CD4-positive, alpha-beta T cell (primary cell): ENCODE measurements at regions of chr5 and their contacts with region 1.

Region 1: DNA sequence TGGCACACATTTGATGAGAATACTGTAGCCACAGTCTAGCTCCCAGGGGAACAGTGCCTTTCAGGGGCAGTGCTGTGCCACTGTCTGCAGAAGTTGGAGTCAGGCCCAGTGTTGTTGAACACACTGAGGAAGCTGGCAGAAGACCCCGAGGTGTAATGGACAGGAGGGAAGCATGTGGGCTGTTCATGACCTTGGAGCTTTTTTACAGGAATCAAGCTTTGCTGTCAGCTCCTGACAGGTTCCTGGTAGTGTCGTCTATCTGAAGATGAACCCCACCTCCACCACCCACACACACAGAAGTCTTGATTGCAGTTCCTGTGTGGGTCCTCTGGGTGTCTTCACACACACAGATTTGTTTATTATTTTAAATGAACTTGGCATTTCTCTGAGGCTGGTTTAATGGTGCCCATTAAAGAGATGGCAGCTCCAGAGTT is 40.3 kb upstream of the TNFAIP8 start:
- DNase-seq: peak in 10 of 14 experiments; percentile 42 to 85 (median 54)
- ATAC-seq: peak; percentile 87
- H3K4me3 ChIP-seq: no peak overlapping the region
- H3K4me3 Mint-ChIP-seq: peak overlapping the region; percentile 59
- H3K27ac ChIP-seq: peak overlapping the region; percentile 43 to 61
- H3K27ac Mint-ChIP-seq: peak overlapping the region; percentile 95
- H3K4me1 ChIP-seq: peaks cover 80% of the 10 kb centered on the region
- H3K4me1 Mint-ChIP-seq: peaks cover 92% of the 10 kb centered on the region
- H3K27me3 ChIP-seq: no peaks in the 10 kb centered on the region
- H3K27me3 Mint-ChIP-seq: no peaks in the 10 kb centered on the region
- CTCF ChIP-seq: peak; percentile 65

Region 2: DNA sequence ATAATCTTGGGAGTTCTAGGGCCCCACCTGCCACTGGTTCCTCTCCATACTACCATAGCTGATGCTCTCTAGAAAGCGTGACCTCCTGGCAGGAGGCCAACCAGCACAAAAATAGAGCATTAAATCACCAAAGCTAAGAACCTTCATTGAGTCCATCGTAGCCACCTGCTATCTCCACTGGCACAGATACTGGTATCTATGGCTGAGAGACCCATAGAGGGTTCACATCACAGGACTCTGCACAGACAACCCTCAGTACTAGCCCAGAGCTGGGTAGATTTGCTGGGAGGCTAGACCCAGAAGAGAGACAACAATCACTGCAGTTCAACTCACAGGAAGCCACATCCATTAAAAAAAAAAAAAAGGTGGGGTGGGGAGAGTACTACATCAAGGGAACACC is 836.2 kb before region 1 on chr5:
- CTCF ChIA-PET with region 1: no interaction called
- POLR2A ChIA-PET with region 1: no interaction called
- intact Hi-C with region 1: no loop called
- DNase-seq: no peak
- ATAC-seq: no peak
- H3K4me3 ChIP-seq: no peak overlapping the region
- H3K4me3 Mint-ChIP-seq: no peak overlapping the region
- H3K27ac ChIP-seq: no peak overlapping the region
- H3K27ac Mint-ChIP-seq: no peak overlapping the region
- H3K4me1 ChIP-seq: no peaks in the 10 kb centered on the region
- H3K4me1 Mint-ChIP-seq: no peaks in the 10 kb centered on the region
- H3K27me3 ChIP-seq: no peaks in the 10 kb centered on the region
- H3K27me3 Mint-ChIP-seq: no peaks in the 10 kb centered on the region
- CTCF ChIP-seq: no peak

Region 3: DNA sequence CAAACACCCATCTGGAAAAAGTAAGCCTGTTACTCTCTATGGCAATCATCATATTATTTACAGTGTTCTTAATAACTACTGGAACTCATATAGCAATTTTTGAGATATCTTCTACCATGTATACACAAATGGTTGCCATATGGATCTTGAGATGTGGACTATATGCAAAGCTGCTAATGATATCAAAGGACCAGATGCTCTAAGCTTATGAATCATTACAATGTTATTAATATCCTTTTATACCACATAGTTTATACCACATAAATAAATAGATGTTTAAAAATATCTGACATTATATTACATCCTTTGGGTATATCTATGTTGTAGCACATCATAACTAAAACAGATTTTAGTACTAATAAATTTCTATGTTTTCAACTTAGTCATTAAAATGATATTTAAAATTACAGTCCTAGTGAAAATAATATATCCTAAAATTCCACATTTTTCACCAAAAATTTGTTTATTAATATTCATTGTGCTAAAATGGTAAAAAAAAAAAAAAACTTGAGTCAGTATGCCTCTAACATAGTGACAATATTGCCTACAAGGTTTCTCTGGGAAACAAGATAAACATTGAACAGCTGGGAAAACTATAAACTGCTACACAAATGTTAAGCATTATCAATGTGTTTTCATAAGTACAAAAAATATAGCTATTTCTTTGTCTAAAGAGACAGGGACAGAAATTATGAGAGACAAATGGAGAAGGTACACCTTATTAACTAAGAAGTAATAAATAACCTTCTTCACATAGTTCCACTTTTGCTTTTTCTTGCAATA is 412.7 kb before region 1 on chr5:
- CTCF ChIA-PET with region 1: no interaction called
- POLR2A ChIA-PET with region 1: no interaction called
- intact Hi-C with region 1: no loop called
- DNase-seq: no peak
- ATAC-seq: no peak
- H3K4me3 ChIP-seq: no peak overlapping the region
- H3K4me3 Mint-ChIP-seq: no peak overlapping the region
- H3K27ac ChIP-seq: no peak overlapping the region
- H3K27ac Mint-ChIP-seq: no peak overlapping the region
- H3K4me1 ChIP-seq: no peaks in the 10 kb centered on the region
- H3K4me1 Mint-ChIP-seq: no peaks in the 10 kb centered on the region
- H3K27me3 ChIP-seq: no peaks in the 10 kb centered on the region
- H3K27me3 Mint-ChIP-seq: no peaks in the 10 kb centered on the region
- CTCF ChIP-seq: no peak

Region 4: GRCh38 chr5:119267958-119268386 is 47.6 kb before region 1 on chr5:
- CTCF ChIA-PET with region 1: interaction called, 10 read pairs
- POLR2A ChIA-PET with region 1: interaction called, 30 read pairs
- intact Hi-C with region 1: no loop called
- DNase-seq: peak; percentile 59 to 93 (median 74)
- ATAC-seq: peak; percentile 76
- H3K4me3 ChIP-seq: peak overlapping the region; percentile 69
- H3K4me3 Mint-ChIP-seq: peak overlapping the region; percentile 99
- H3K27ac ChIP-seq: peak overlapping the region; percentile 89 to 92
- H3K27ac Mint-ChIP-seq: peak overlapping the region; percentile 97
- H3K4me1 ChIP-seq: peaks cover 27% of the 10 kb centered on the region
- H3K4me1 Mint-ChIP-seq: peaks cover 76% of the 10 kb centered on the region
- H3K27me3 ChIP-seq: no peaks in the 10 kb centered on the region
- H3K27me3 Mint-ChIP-seq: no peaks in the 10 kb centered on the region
- CTCF ChIP-seq: peak; percentile 70

Region 5: DNA sequence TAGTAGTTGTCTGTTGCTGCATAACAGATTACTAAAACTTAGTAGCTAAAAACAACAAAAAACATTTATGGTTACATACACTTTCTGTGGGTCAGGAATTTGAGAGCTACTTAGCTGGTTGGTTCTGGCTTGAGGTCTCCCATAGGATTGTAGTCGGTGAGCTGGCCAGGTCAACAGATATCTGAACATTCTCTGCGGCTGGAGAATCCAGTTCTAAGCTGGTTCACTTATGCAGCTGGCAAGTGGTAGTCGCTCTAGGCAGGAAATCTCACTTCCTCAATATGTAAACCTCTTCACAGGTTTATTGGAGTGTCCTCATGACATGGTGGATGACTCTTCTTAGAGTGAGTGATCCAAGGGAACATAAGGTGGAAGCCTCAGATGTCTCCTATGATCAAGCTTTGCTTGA is 25.4 kb before region 1 on chr5:
- CTCF ChIA-PET with region 1: interaction called, 13 read pairs
- POLR2A ChIA-PET with region 1: interaction called, 11 read pairs
- intact Hi-C with region 1: no loop called
- DNase-seq: peak in 4 of 14 experiments; percentile 23 to 69 (median 66)
- ATAC-seq: peak; percentile 28
- H3K4me3 ChIP-seq: peak overlapping the region; percentile 28
- H3K4me3 Mint-ChIP-seq: peak overlapping the region; percentile 76
- H3K27ac ChIP-seq: peak overlapping the region; percentile 68 to 89
- H3K27ac Mint-ChIP-seq: peak overlapping the region; percentile 97
- H3K4me1 ChIP-seq: peaks cover 42% of the 10 kb centered on the region
- H3K4me1 Mint-ChIP-seq: peaks cover 83% of the 10 kb centered on the region
- H3K27me3 ChIP-seq: no peaks in the 10 kb centered on the region
- H3K27me3 Mint-ChIP-seq: no peaks in the 10 kb centered on the region
- CTCF ChIP-seq: no peak

Region 6: GRCh38 chr5:119328753-119329602 is 13.4 kb after region 1 on chr5:
- CTCF ChIA-PET with region 1: interaction called, 28 read pairs
- POLR2A ChIA-PET with region 1: interaction called, 16 read pairs
- intact Hi-C with region 1: loop called in 1 of 2 experiments (anchors 2 kb)
- DNase-seq: peak in 13 of 14 experiments; percentile 45 to 85 (median 67)
- ATAC-seq: peak; percentile 60
- H3K4me3 ChIP-seq: peak overlapping the region; percentile 13
- H3K4me3 Mint-ChIP-seq: peak overlapping the region; percentile 83
- H3K27ac ChIP-seq: peak overlapping the region; percentile 77 to 94
- H3K27ac Mint-ChIP-seq: peak overlapping the region; percentile 97
- H3K4me1 ChIP-seq: peaks cover 84% of the 10 kb centered on the region
- H3K4me1 Mint-ChIP-seq: peaks cover 94% of the 10 kb centered on the region
- H3K27me3 ChIP-seq: no peaks in the 10 kb centered on the region
- H3K27me3 Mint-ChIP-seq: no peaks in the 10 kb centered on the region
- CTCF ChIP-seq: no peak

Region 7: GRCh38 chr5:119347991-119348390 is 32.5 kb after region 1 on chr5:
- CTCF ChIA-PET with region 1: interaction called, 10 read pairs
- POLR2A ChIA-PET with region 1: interaction called, 4 read pairs
- intact Hi-C with region 1: no loop called
- DNase-seq: no peak
- ATAC-seq: no peak
- H3K4me3 ChIP-seq: no peak overlapping the region
- H3K4me3 Mint-ChIP-seq: peak overlapping the region; percentile 11
- H3K27ac ChIP-seq: no peak overlapping the region
- H3K27ac Mint-ChIP-seq: peak overlapping the region; percentile 86
- H3K4me1 ChIP-seq: peaks cover 73% of the 10 kb centered on the region
- H3K4me1 Mint-ChIP-seq: peaks cover 96% of the 10 kb centered on the region
- H3K27me3 ChIP-seq: no peaks in the 10 kb centered on the region
- H3K27me3 Mint-ChIP-seq: no peaks in the 10 kb centered on the region
- CTCF ChIP-seq: no peak

Region 8: DNA sequence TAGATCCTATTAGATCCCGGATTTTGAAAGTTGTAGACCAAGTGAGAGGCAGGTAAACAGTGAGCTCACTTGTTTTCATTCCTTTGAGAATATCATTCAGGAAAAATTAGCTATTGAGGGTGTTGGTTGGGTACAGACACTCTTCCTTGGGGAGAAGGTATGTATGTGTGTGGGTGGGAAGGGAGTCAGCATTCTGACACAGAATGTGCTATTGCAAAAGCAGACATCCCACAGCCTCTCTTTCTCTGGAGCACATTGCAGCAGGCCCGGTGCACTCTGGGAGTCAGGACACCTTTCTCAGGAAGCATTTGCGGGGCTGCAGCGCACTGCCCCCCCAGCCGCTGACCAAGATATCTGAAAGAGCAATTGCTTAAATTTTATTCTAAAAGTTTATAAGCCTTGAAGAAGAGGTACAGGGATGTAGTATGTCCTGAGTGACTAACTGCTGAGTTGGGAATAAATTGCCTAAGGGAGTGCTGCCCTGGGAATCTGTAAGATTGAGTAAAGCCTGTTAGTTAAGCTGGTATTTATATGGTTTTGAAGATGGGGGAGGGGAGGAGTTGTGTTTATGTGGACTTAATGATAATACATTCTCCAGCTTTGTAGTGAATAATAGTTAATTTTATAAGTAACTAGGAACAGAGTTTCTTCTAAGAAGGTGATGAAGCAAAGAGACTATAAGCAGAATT is 45.5 kb after region 1 on chr5:
- CTCF ChIA-PET with region 1: interaction called, 13 read pairs
- POLR2A ChIA-PET with region 1: interaction called, 14 read pairs
- intact Hi-C with region 1: loop called (anchors 5 kb)
- DNase-seq: no peak
- ATAC-seq: no peak
- H3K4me3 ChIP-seq: no peak overlapping the region
- H3K4me3 Mint-ChIP-seq: peak overlapping the region; percentile 47
- H3K27ac ChIP-seq: peak overlapping the region; percentile 32 to 37
- H3K27ac Mint-ChIP-seq: peak overlapping the region; percentile 86
- H3K4me1 ChIP-seq: peaks cover 96% of the 10 kb centered on the region
- H3K4me1 Mint-ChIP-seq: peaks cover 97% of the 10 kb centered on the region
- H3K27me3 ChIP-seq: no peaks in the 10 kb centered on the region
- H3K27me3 Mint-ChIP-seq: no peaks in the 10 kb centered on the region
- CTCF ChIP-seq: no peak

Region 9: GRCh38 chr5:119452373-119453039 is 137.0 kb after region 1 on chr5 and contains the start of gene HSD17B4:
- CTCF ChIA-PET with region 1: no interaction called
- POLR2A ChIA-PET with region 1: no interaction called
- intact Hi-C with region 1: no loop called
- DNase-seq: peak; percentile 55 to 90 (median 72)
- ATAC-seq: peak; percentile 93
- H3K4me3 ChIP-seq: peak within 1 kb of the TSS; percentile 82
- H3K4me3 Mint-ChIP-seq: peak within 1 kb of the TSS; percentile 89
- H3K27ac ChIP-seq: peak within 1 kb of the TSS; percentile 66 to 80
- H3K27ac Mint-ChIP-seq: peak within 1 kb of the TSS; percentile 73
- H3K4me1 ChIP-seq: peaks cover 13% of the 10 kb centered on the region
- H3K4me1 Mint-ChIP-seq: peaks cover 24% of the 10 kb centered on the region
- H3K27me3 ChIP-seq: no peaks in the 10 kb centered on the region
- H3K27me3 Mint-ChIP-seq: no peaks in the 10 kb centered on the region
- CTCF ChIP-seq: no peak
- total RNA-seq, gene HSD17B4: 11.9 to 13.1 TPM

Region 10: DNA sequence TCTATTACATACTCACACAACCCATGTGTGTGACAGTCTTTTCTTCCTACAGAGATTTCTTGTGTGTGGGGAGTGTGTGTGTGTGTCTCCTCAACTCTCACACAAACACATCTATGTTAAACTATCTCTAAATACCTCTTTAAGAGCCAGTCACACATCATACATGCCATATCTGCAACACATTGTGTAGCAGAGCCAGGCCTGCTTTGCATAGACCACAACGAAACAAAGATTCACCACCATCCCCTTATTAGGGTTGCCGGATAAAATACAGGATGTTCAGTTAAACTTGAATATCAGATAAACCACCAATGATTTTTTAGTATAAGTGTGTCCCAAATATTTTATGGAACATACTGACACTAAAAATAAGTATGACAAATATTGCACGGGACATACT is 316.1 kb after region 1 on chr5:
- CTCF ChIA-PET with region 1: no interaction called
- POLR2A ChIA-PET with region 1: no interaction called
- intact Hi-C with region 1: no loop called
- DNase-seq: no peak
- ATAC-seq: no peak
- H3K4me3 ChIP-seq: no peak overlapping the region
- H3K4me3 Mint-ChIP-seq: no peak overlapping the region
- H3K27ac ChIP-seq: no peak overlapping the region
- H3K27ac Mint-ChIP-seq: no peak overlapping the region
- H3K4me1 ChIP-seq: no peaks in the 10 kb centered on the region
- H3K4me1 Mint-ChIP-seq: no peaks in the 10 kb centered on the region
- H3K27me3 ChIP-seq: no peaks in the 10 kb centered on the region
- H3K27me3 Mint-ChIP-seq: peaks cover 16% of the 10 kb centered on the region
- CTCF ChIP-seq: no peak